B cell (primary cell): ENCODE measurements at regions of chr9 and their contacts with region 1.

Region 1: GRCh38 chr9:76704593-76705204 is 59.5 kb upstream of the PCA3 start:
- DNase-seq: peak; percentile 75
- ATAC-seq: peak; percentile 33
- H3K4me3 ChIP-seq: no peak overlapping the region
- H3K4me3 Mint-ChIP-seq: no peak overlapping the region
- H3K27ac ChIP-seq: no peak overlapping the region
- H3K27ac Mint-ChIP-seq: no peak overlapping the region
- H3K4me1 ChIP-seq: peaks cover 4 to 6% of the 10 kb centered on the region in 2 donors
- H3K4me1 Mint-ChIP-seq: peaks cover 7% of the 10 kb centered on the region
- H3K27me3 ChIP-seq: peaks cover 0 to 16% (median 3%) of the 10 kb centered on the region in 4 experiments
- H3K27me3 Mint-ChIP-seq: peaks cover 57% of the 10 kb centered on the region
- CTCF ChIP-seq: peak; percentile 90

Region 2: GRCh38 chr9:76393963-76394679 is 310.6 kb before region 1 on chr9 and contains the start of gene RFK:
- CTCF ChIA-PET with region 1: interaction called, 15 read pairs
- POLR2A ChIA-PET with region 1: no interaction called
- intact Hi-C with region 1: loop called (anchors 2 kb)
- DNase-seq: peak; percentile 95
- ATAC-seq: peak; percentile 92
- H3K4me3 ChIP-seq: peak within 1 kb of the TSS; percentile 93 to 98 (median 97)
- H3K4me3 Mint-ChIP-seq: peak within 1 kb of the TSS; percentile 94
- H3K27ac ChIP-seq: peak within 1 kb of the TSS; percentile 78 to 98
- H3K27ac Mint-ChIP-seq: peak within 1 kb of the TSS; percentile 98
- H3K4me1 ChIP-seq: peaks cover 9 to 15% of the 10 kb centered on the region in 2 donors
- H3K4me1 Mint-ChIP-seq: peaks cover 15% of the 10 kb centered on the region
- H3K27me3 ChIP-seq: no peaks in the 10 kb centered on the region
- H3K27me3 Mint-ChIP-seq: no peaks in the 10 kb centered on the region
- CTCF ChIP-seq: peak; percentile 61
- total RNA-seq, gene RFK: 7.3 and 9.0 TPM in 2 replicates

Region 3: GRCh38 chr9:76403352-76403751 is 301.3 kb before region 1 on chr9:
- CTCF ChIA-PET with region 1: interaction called, 17 read pairs
- POLR2A ChIA-PET with region 1: no interaction called
- intact Hi-C with region 1: loop called (anchors 1 kb)
- DNase-seq: peak; percentile 70
- ATAC-seq: peak; percentile 69
- H3K4me3 ChIP-seq: peak overlapping the region in 1 of 5 experiments; percentile 37
- H3K4me3 Mint-ChIP-seq: peak overlapping the region; percentile 40
- H3K27ac ChIP-seq: peak overlapping the region in 1 of 2 donors; percentile 20
- H3K27ac Mint-ChIP-seq: peak overlapping the region; percentile 10
- H3K4me1 ChIP-seq: peaks cover 0 to 3% of the 10 kb centered on the region in 2 donors
- H3K4me1 Mint-ChIP-seq: peaks cover 12% of the 10 kb centered on the region
- H3K27me3 ChIP-seq: no peaks in the 10 kb centered on the region
- H3K27me3 Mint-ChIP-seq: no peaks in the 10 kb centered on the region
- CTCF ChIP-seq: peak; percentile 73

Region 4: DNA sequence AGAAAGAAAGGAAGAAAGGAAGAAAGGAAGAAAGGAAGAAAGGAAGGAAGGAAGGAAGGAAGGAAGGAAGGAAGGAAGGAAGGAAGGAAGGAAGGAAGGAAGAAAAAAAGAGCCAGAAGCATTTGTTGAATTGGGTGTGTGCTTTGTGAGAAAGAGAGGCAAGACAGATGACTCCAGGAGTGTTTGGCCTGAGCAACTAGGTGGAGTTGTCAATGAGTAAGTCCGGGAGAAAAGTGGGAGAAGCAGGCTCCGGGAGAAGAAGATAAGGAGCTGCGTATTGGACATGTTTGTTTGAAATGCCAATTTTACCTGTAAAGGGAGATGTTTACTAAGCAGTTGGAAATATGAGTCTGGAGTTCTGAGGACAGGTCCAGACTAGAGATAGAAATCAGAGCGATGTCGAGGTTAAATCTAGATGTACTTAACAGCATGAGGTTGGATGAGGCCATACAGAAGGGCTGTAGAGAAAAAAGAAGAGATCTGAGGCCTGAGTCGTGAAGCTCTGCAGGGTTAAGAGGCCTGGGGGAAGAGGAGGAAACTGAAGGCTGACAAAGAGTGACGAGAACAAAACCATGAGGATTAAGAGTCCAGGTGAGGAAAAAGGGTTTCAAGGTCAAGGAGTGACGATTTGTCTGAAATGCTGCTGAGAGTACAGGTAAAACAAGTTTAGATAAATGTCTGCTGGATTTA is 260.7 kb before region 1 on chr9:
- CTCF ChIA-PET with region 1: interaction called, 91 read pairs
- POLR2A ChIA-PET with region 1: no interaction called
- intact Hi-C with region 1: loop called (anchors 1 kb)
- DNase-seq: no peak
- ATAC-seq: no peak
- H3K4me3 ChIP-seq: no peak overlapping the region
- H3K4me3 Mint-ChIP-seq: no peak overlapping the region
- H3K27ac ChIP-seq: no peak overlapping the region
- H3K27ac Mint-ChIP-seq: no peak overlapping the region
- H3K4me1 ChIP-seq: peaks cover 3 to 5% of the 10 kb centered on the region in 2 donors
- H3K4me1 Mint-ChIP-seq: peaks cover 2% of the 10 kb centered on the region
- H3K27me3 ChIP-seq: no peaks in the 10 kb centered on the region
- H3K27me3 Mint-ChIP-seq: no peaks in the 10 kb centered on the region
- CTCF ChIP-seq: no peak

Region 5: DNA sequence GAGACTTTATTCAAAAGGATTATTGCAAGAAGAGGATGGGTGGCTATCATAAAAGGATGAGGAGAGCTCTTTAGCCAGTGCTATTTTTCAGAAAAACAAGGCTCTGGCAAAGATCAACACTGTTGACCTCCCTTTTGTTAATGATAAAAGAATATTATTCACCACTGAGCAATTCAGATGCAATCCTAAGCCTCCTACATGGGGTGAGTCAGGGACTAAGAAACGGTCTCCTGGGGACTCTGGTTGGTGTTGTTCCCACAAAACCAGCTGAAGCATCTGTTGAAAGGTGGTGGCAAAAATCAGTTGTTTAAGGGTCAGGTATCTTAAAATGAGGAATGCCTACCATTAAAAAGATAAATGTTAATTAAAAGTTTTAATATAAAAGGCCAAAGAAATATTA is 253.5 kb before region 1 on chr9:
- CTCF ChIA-PET with region 1: interaction called, 91 read pairs
- POLR2A ChIA-PET with region 1: no interaction called
- intact Hi-C with region 1: loop called (anchors 1 kb)
- DNase-seq: no peak
- ATAC-seq: no peak
- H3K4me3 ChIP-seq: no peak overlapping the region
- H3K4me3 Mint-ChIP-seq: no peak overlapping the region
- H3K27ac ChIP-seq: no peak overlapping the region
- H3K27ac Mint-ChIP-seq: no peak overlapping the region
- H3K4me1 ChIP-seq: peaks cover 7 to 9% of the 10 kb centered on the region in 2 donors
- H3K4me1 Mint-ChIP-seq: peaks cover 6% of the 10 kb centered on the region
- H3K27me3 ChIP-seq: no peaks in the 10 kb centered on the region
- H3K27me3 Mint-ChIP-seq: no peaks in the 10 kb centered on the region
- CTCF ChIP-seq: no peak

Region 6: GRCh38 chr9:76610011-76610352 is 94.7 kb before region 1 on chr9:
- CTCF ChIA-PET with region 1: no interaction called
- POLR2A ChIA-PET with region 1: no interaction called
- intact Hi-C with region 1: no loop called
- DNase-seq: no peak
- ATAC-seq: no peak
- H3K4me3 ChIP-seq: no peak overlapping the region
- H3K4me3 Mint-ChIP-seq: no peak overlapping the region
- H3K27ac ChIP-seq: no peak overlapping the region
- H3K27ac Mint-ChIP-seq: no peak overlapping the region
- H3K4me1 ChIP-seq: peaks cover 9 to 12% of the 10 kb centered on the region in 2 donors
- H3K4me1 Mint-ChIP-seq: peaks cover 14% of the 10 kb centered on the region
- H3K27me3 ChIP-seq: no peaks in the 10 kb centered on the region
- H3K27me3 Mint-ChIP-seq: peaks cover 5% of the 10 kb centered on the region
- CTCF ChIP-seq: no peak

Region 7: GRCh38 chr9:76658535-76659231 is 46.0 kb before region 1 on chr9:
- CTCF ChIA-PET with region 1: interaction called, 24 read pairs
- POLR2A ChIA-PET with region 1: no interaction called
- intact Hi-C with region 1: loop called (anchors 5 kb)
- DNase-seq: peak; percentile 68
- ATAC-seq: peak; percentile 81
- H3K4me3 ChIP-seq: no peak overlapping the region
- H3K4me3 Mint-ChIP-seq: no peak overlapping the region
- H3K27ac ChIP-seq: no peak overlapping the region
- H3K27ac Mint-ChIP-seq: no peak overlapping the region
- H3K4me1 ChIP-seq: peaks cover 17 to 32% of the 10 kb centered on the region in 2 donors
- H3K4me1 Mint-ChIP-seq: peaks cover 34% of the 10 kb centered on the region
- H3K27me3 ChIP-seq: no peaks in the 10 kb centered on the region
- H3K27me3 Mint-ChIP-seq: peaks cover 6% of the 10 kb centered on the region
- CTCF ChIP-seq: peak; percentile 79

Region 8: GRCh38 chr9:76687861-76688391 is 16.8 kb before region 1 on chr9:
- CTCF ChIA-PET with region 1: interaction called, 23 read pairs
- POLR2A ChIA-PET with region 1: no interaction called
- intact Hi-C with region 1: no loop called
- DNase-seq: no peak
- ATAC-seq: no peak
- H3K4me3 ChIP-seq: no peak overlapping the region
- H3K4me3 Mint-ChIP-seq: no peak overlapping the region
- H3K27ac ChIP-seq: no peak overlapping the region
- H3K27ac Mint-ChIP-seq: no peak overlapping the region
- H3K4me1 ChIP-seq: peaks cover 3 to 6% of the 10 kb centered on the region in 2 donors
- H3K4me1 Mint-ChIP-seq: peaks cover 12% of the 10 kb centered on the region
- H3K27me3 ChIP-seq: peaks cover 0 to 22% (median 10%) of the 10 kb centered on the region in 4 experiments
- H3K27me3 Mint-ChIP-seq: peaks cover 30% of the 10 kb centered on the region
- CTCF ChIP-seq: no peak

Region 9: GRCh38 chr9:76773036-76773435 is 68.3 kb after region 1 on chr9:
- CTCF ChIA-PET with region 1: no interaction called
- POLR2A ChIA-PET with region 1: no interaction called
- intact Hi-C with region 1: no loop called
- DNase-seq: no peak
- ATAC-seq: no peak
- H3K4me3 ChIP-seq: no peak overlapping the region
- H3K4me3 Mint-ChIP-seq: no peak overlapping the region
- H3K27ac ChIP-seq: no peak overlapping the region
- H3K27ac Mint-ChIP-seq: no peak overlapping the region
- H3K4me1 ChIP-seq: no peaks in the 10 kb centered on the region
- H3K4me1 Mint-ChIP-seq: no peaks in the 10 kb centered on the region
- H3K27me3 ChIP-seq: no peaks in the 10 kb centered on the region
- H3K27me3 Mint-ChIP-seq: peaks cover 4% of the 10 kb centered on the region
- CTCF ChIP-seq: no peak